ENCODE measurements at regions of chr17 and their contacts with region 1.

Region 1: GRCh38 chr17:7740481-7741001 is 23.0 kb downstream of the DNAH2 start:
- DNase-seq: no peak
- H3K4me3 Mint-ChIP-seq: no peak overlapping the region
- H3K27ac Mint-ChIP-seq: no peak overlapping the region
- H3K4me1 Mint-ChIP-seq: no peaks in the 10 kb centered on the region
- H3K27me3 Mint-ChIP-seq: peaks cover 73% of the 10 kb centered on the region
- CTCF ChIP-seq: no peak

Region 2: GRCh38 chr17:7782237-7782636 is 41.7 kb after region 1 on chr17:
- CTCF ChIA-PET with region 1: interaction called, 27 read pairs
- intact Hi-C with region 1: loop called (anchors 2 kb)
- DNase-seq: no peak
- H3K4me3 Mint-ChIP-seq: no peak overlapping the region
- H3K27ac Mint-ChIP-seq: no peak overlapping the region
- H3K4me1 Mint-ChIP-seq: no peaks in the 10 kb centered on the region
- H3K27me3 Mint-ChIP-seq: peaks cover 30% of the 10 kb centered on the region
- CTCF ChIP-seq: no peak

Region 3: GRCh38 chr17:7825206-7825990 is 84.9 kb after region 1 on chr17:
- CTCF ChIA-PET with region 1: no interaction called
- intact Hi-C with region 1: no loop called
- DNase-seq: no peak
- H3K4me3 Mint-ChIP-seq: no peak overlapping the region
- H3K27ac Mint-ChIP-seq: no peak overlapping the region
- H3K4me1 Mint-ChIP-seq: peaks cover 8% of the 10 kb centered on the region
- H3K27me3 Mint-ChIP-seq: peaks cover 77% of the 10 kb centered on the region
- CTCF ChIP-seq: no peak

Region 4: GRCh38 chr17:7982666-7983065 is 242.1 kb after region 1 on chr17:
- CTCF ChIA-PET with region 1: no interaction called
- intact Hi-C with region 1: loop called (anchors 5 kb)
- DNase-seq: no peak
- H3K4me3 Mint-ChIP-seq: no peak overlapping the region
- H3K27ac Mint-ChIP-seq: no peak overlapping the region
- H3K4me1 Mint-ChIP-seq: peaks cover 11% of the 10 kb centered on the region
- H3K27me3 Mint-ChIP-seq: peaks cover 13% of the 10 kb centered on the region
- CTCF ChIP-seq: no peak

Region 5: DNA sequence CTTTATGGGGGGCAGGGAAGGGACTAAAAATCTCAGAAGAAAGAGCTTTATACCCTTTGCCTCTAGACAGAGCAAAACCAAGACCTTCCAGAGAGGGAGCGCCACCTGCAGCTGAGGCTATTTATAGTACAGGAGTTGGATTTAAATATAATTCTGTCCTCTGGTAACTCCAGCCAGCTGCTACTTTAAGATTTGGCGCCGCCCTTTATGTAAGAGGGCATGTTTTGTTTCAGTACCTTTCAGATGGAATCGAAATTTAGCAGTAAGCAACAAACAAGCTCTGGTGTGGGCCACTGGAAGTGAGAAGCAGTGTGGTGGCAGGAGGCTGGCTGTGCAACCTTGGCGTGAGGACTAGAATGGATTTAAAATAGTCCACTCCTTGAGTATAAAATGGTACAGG is 256.6 kb after region 1 on chr17:
- CTCF ChIA-PET with region 1: no interaction called
- intact Hi-C with region 1: loop called (anchors 5 kb)
- DNase-seq: peak; percentile 44
- H3K4me3 Mint-ChIP-seq: no peak overlapping the region
- H3K27ac Mint-ChIP-seq: no peak overlapping the region
- H3K4me1 Mint-ChIP-seq: no peaks in the 10 kb centered on the region
- H3K27me3 Mint-ChIP-seq: peaks cover 19% of the 10 kb centered on the region
- CTCF ChIP-seq: no peak

Region 6: DNA sequence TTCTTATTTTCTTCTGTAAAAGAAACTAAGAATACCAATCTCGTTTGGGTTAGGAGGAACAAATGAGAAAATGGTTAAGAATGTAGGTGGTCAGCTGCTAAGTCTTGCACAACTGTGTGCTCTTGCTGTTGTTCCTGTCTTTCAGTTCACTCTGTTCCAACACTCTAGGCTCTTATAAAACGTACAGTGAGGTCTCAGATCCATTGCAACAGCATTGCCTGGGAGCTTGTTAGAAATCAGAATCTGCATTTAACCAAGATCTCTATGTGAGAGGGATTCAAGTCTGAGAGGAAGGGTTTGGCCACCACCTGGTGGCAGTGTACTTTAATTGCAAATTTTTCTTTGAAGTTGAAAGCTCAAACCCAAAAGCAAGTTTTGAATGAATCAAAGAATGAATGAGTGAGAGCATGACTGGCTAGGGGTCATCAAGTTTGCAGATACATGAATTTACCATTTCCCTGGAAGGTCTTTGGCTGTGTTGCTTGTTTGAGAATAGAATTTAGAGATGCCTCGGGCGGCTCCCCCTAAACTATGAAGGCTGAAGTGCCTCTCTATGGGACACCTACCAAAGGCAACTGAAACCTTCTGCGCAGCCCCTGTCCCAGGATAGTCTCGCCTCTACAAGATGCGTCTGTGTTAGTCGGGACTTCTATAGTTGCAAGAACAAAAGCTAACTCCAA is 300.8 kb after region 1 on chr17:
- CTCF ChIA-PET with region 1: interaction called, 7 read pairs
- intact Hi-C with region 1: loop called (anchors 5 kb)
- DNase-seq: peak; percentile 40
- H3K4me3 Mint-ChIP-seq: no peak overlapping the region
- H3K27ac Mint-ChIP-seq: no peak overlapping the region
- H3K4me1 Mint-ChIP-seq: no peaks in the 10 kb centered on the region
- H3K27me3 Mint-ChIP-seq: peaks cover 53% of the 10 kb centered on the region
- CTCF ChIP-seq: peak; percentile 41

Measured in Calu3 (cell line).